ENCODE measurements at regions of chr13 and their contacts with region 1.

Region 1: GRCh38 chr13:35164324-35164932 is 222.4 kb downstream of the NBEA start:
- DNase-seq: no peak
- ATAC-seq: peak; percentile 52
- H3K4me3 Mint-ChIP-seq: no peak overlapping the region
- H3K27ac Mint-ChIP-seq: no peak overlapping the region
- H3K4me1 Mint-ChIP-seq: peaks cover 8% of the 10 kb centered on the region
- H3K27me3 Mint-ChIP-seq: no peaks in the 10 kb centered on the region
- CTCF ChIP-seq: peak; percentile 63

Region 2: GRCh38 chr13:33799950-33800592 is 1364.4 kb before region 1 on chr13:
- CTCF ChIA-PET with region 1: interaction called, 6 read pairs
- POLR2A ChIA-PET with region 1: no interaction called
- intact Hi-C with region 1: loop called (anchors 2 kb)
- DNase-seq: no peak
- ATAC-seq: no peak
- H3K4me3 Mint-ChIP-seq: no peak overlapping the region
- H3K27ac Mint-ChIP-seq: no peak overlapping the region
- H3K4me1 Mint-ChIP-seq: no peaks in the 10 kb centered on the region
- H3K27me3 Mint-ChIP-seq: peaks cover 2% of the 10 kb centered on the region
- CTCF ChIP-seq: no peak

Region 3: DNA sequence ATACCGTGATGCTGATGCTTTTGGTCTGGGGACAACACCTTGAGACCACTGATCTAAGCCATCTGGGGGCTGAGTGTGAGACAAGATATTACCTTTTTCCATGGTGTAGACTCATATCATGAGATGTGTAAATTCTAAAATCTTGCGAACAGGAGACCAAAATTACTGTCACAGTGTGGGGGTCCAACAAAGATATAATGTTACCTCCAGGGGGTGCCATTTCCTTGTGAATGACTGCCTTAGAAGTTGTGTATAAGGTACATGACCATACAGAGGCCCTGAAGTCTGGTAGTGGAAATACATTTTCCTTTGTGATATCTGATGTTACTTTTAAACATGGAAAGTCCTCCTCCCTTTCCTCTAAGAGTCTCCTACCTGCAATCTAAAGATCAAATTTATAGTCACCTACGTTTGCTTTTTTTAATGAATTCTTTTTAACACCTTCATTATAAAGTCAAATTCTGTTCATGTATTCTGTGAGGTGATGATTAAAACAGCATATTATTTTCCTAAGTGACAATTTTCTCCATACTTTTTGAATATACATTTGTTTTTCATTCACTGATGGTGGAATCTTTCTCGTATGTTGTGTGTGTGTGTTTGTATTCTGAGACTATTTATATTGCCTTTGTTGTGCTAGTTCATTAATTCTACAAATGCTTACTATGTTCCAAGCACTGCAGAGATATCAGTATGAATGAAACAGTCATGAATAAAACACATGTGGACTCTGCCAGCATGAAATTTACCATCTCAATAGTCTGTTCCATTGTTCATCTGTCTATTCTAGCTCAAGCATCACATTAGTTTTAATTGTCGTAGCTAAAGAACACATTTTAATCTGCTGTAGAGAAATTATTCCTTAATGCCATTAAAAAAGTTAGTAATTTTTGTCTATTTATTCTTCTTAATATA is 1232.8 kb before region 1 on chr13:
- CTCF ChIA-PET with region 1: interaction called, 7 read pairs
- POLR2A ChIA-PET with region 1: no interaction called
- intact Hi-C with region 1: loop called (anchors 2 kb)
- DNase-seq: no peak
- ATAC-seq: no peak
- H3K4me3 Mint-ChIP-seq: no peak overlapping the region
- H3K27ac Mint-ChIP-seq: no peak overlapping the region
- H3K4me1 Mint-ChIP-seq: no peaks in the 10 kb centered on the region
- H3K27me3 Mint-ChIP-seq: no peaks in the 10 kb centered on the region
- CTCF ChIP-seq: no peak

Region 4: GRCh38 chr13:34941835-34942731 is 222.3 kb before region 1 on chr13 and contains the start of gene NBEA:
- CTCF ChIA-PET with region 1: no interaction called
- POLR2A ChIA-PET with region 1: no interaction called
- intact Hi-C with region 1: loop called (anchors 5 kb)
- DNase-seq: peak; percentile 82
- ATAC-seq: peak; percentile 81
- H3K4me3 Mint-ChIP-seq: peak within 1 kb of the TSS; percentile 90
- H3K27ac Mint-ChIP-seq: peak within 1 kb of the TSS; percentile 76
- H3K4me1 Mint-ChIP-seq: peaks cover 27% of the 10 kb centered on the region
- H3K27me3 Mint-ChIP-seq: peaks cover 14% of the 10 kb centered on the region
- CTCF ChIP-seq: no peak
- total RNA-seq, gene NBEA: 2.9 and 3.9 TPM in 2 replicates

Region 5: GRCh38 chr13:35225582-35225981 is 61.2 kb after region 1 on chr13:
- CTCF ChIA-PET with region 1: no interaction called
- POLR2A ChIA-PET with region 1: no interaction called
- intact Hi-C with region 1: no loop called
- DNase-seq: no peak
- ATAC-seq: no peak
- H3K4me3 Mint-ChIP-seq: no peak overlapping the region
- H3K27ac Mint-ChIP-seq: no peak overlapping the region
- H3K4me1 Mint-ChIP-seq: no peaks in the 10 kb centered on the region
- H3K27me3 Mint-ChIP-seq: no peaks in the 10 kb centered on the region
- CTCF ChIP-seq: no peak

Measured in activated B cell treated with CpG ODN at 0.5 μM for 24 hours (primary cell).